SK-N-SH (cell line): ENCODE measurements at regions of chr2 and their contacts with region 1.

Region 1: GRCh38 chr2:135600915-135601314 is 69.6 kb downstream of the R3HDM1 start:
- DNase-seq: no peak
- H3K4me3 ChIP-seq: no peak overlapping the region
- H3K27ac ChIP-seq: no peak overlapping the region
- H3K4me1 ChIP-seq: no peaks in the 10 kb centered on the region; a peak in 1 of 4 replicates
- H3K27me3 ChIP-seq: no peaks in the 10 kb centered on the region
- CTCF ChIP-seq: peak; percentile 45
- EP300 ChIP-seq: no peak
- RAD21 ChIP-seq: peak; percentile 56; the same call in 1 of the 2 replicates

Region 2: GRCh38 chr2:135585586-135585985 is 15.3 kb before region 1 on chr2:
- CTCF ChIA-PET with region 1: interaction called, 10 read pairs
- POLR2A ChIA-PET with region 1: no interaction called
- DNase-seq: no peak
- H3K4me3 ChIP-seq: no peak overlapping the region
- H3K27ac ChIP-seq: no peak overlapping the region
- H3K4me1 ChIP-seq: peaks cover 2 to 3% of the 10 kb centered on the region in 2 experiments; a peak in 2 of 4 replicates
- H3K27me3 ChIP-seq: no peaks in the 10 kb centered on the region
- CTCF ChIP-seq: peak; percentile 41
- EP300 ChIP-seq: no peak
- RAD21 ChIP-seq: 0 out of 2 replicates have a peak, but pooled peaks have one; percentile 14